ENCODE measurements at regions of chr16 and their contacts with region 1.

Region 1: DNA sequence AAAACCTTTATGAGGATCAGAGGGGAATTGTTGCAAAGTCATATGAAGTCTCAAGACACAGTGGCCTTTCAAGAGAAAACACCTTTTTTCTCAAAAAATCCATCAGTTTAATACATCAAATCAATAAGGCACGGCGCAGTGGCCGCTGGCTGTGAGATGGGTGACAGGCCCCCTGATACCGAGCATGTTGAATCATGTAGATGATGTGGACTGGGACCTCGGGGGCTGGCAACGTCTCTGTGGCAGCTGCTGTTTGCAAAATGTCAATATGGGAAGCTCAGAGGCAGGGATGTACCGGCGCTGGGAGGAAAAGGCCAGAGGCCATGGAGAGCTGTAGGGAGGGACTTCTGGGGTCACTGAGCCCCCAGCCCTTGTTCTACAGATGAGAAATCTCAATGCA is 169.1 kb downstream of the GSG1L start:
- DNase-seq: no peak

Region 2: GRCh38 chr16:27816561-27816960 is 77.8 kb before region 1 on chr16:
- intact Hi-C with region 1: no loop called
- DNase-seq: peak; percentile 45

Region 3: GRCh38 chr16:27922433-27922832 is 28.0 kb after region 1 on chr16:
- intact Hi-C with region 1: loop called in 1 of 2 experiments (anchors 1 kb)
- DNase-seq: no peak

Region 4: DNA sequence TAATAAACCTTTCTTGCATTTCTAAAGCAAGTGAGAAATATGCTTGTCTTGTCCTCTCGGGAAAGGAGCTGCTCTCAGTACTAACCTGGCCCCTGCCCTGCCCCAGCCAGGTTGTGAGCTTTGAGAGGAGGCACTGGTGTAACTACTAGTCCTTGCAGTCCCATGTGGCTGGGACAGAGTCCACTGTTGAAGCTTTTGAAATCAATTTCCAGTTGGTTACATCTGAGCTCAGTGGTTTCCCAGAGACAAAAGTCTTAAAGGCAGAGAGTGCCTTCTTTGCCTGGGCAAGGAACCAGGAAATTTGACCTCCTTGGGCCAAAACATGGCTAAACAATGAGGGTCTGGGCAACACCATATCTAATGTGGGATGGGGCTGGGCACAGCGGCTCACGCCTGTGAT is 120.5 kb after region 1 on chr16:
- intact Hi-C with region 1: no loop called
- DNase-seq: peak; percentile 8